Activated T-helper 2 cell treated with anti-CD3 and anti-CD28 coated beads, Interferon-gamma antibody, Interleukin-2, Interleukin-4, amounts not matched to agents 10 μg/mL and 5 μg/mL and 100 μg/mL, durations not matched to agents 14 hours and 24 hours and 36 hours (primary cell): ENCODE measurements at regions of chr6 and their contacts with region 1.

Region 1: GRCh38 chr6:42520786-42521607 is 42.8 kb upstream of the UBR2 start:
- DNase-seq: no peak
- H3K4me3 Mint-ChIP-seq: no peak overlapping the region
- H3K27ac Mint-ChIP-seq: peak overlapping the region; percentile 90
- H3K4me1 Mint-ChIP-seq: peaks cover 18% of the 10 kb centered on the region
- H3K27me3 Mint-ChIP-seq: no peaks in the 10 kb centered on the region

Region 2: DNA sequence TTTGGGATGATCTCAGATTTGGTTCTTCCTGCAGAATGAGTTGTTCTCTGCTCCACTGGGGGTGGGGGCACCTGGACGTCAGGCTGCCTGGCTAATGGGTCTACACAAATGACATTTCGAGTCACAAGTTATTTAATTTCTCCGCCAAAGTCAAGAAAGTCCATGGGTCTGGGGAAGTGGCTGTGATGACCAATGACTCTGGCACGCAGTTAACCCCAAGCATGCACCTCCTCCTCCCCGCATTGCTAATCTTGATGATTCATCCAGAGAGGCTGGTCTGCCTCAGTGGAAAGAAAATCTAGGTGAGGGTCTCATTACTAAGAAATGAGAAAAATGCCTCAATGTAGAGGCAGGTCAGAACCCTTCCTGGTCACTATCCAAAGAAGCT is 205.0 kb before region 1 on chr6:
- intact Hi-C with region 1: loop called (anchors 10 kb)
- DNase-seq: no peak
- H3K4me3 Mint-ChIP-seq: no peak overlapping the region
- H3K27ac Mint-ChIP-seq: peak overlapping the region; percentile 90
- H3K4me1 Mint-ChIP-seq: peaks cover 43% of the 10 kb centered on the region
- H3K27me3 Mint-ChIP-seq: no peaks in the 10 kb centered on the region

Region 3: GRCh38 chr6:42332916-42333315 is 188.1 kb before region 1 on chr6:
- intact Hi-C with region 1: no loop called
- DNase-seq: no peak
- H3K4me3 Mint-ChIP-seq: no peak overlapping the region
- H3K27ac Mint-ChIP-seq: no peak overlapping the region
- H3K4me1 Mint-ChIP-seq: peaks cover 17% of the 10 kb centered on the region
- H3K27me3 Mint-ChIP-seq: no peaks in the 10 kb centered on the region

Region 4: DNA sequence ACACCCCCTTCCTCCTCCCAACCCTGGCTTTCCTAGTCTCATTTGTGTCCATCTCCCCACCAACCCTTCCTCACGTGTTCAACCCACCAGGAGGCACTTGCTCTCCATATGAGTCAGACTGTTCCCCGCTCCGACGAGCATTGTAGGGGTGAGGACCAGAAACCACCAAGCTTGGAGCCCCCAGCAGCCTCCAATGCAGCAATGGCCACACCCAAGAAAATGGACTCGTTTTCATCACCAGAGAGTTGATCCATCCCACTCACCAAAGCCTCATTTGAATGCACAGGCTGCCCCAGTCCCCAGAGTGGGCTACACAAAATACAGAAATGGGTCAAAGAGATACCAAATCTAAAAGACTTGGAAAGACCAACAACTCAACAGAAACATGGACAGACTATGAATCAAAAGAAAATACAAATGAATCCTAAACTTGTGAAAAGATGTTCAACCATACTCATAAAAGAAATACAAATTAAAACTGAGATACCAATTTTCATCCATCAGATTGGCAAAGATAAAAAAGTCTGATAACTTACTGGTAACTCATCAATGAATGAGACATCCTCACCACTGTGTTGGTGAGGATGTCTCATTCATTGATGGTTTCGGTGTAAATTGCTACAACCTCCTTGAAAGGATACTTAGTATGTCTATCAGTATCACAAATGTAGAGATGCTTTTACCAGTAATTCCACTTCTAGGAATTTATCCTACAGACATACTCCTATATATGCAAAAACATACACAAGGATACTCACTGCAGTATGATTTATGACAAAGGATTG is 137.4 kb before region 1 on chr6:
- intact Hi-C with region 1: loop called (anchors 2 kb)
- DNase-seq: no peak
- H3K4me3 Mint-ChIP-seq: peak overlapping the region; percentile 51
- H3K27ac Mint-ChIP-seq: peak overlapping the region; percentile 97
- H3K4me1 Mint-ChIP-seq: peaks cover 75% of the 10 kb centered on the region
- H3K27me3 Mint-ChIP-seq: no peaks in the 10 kb centered on the region

Region 5: DNA sequence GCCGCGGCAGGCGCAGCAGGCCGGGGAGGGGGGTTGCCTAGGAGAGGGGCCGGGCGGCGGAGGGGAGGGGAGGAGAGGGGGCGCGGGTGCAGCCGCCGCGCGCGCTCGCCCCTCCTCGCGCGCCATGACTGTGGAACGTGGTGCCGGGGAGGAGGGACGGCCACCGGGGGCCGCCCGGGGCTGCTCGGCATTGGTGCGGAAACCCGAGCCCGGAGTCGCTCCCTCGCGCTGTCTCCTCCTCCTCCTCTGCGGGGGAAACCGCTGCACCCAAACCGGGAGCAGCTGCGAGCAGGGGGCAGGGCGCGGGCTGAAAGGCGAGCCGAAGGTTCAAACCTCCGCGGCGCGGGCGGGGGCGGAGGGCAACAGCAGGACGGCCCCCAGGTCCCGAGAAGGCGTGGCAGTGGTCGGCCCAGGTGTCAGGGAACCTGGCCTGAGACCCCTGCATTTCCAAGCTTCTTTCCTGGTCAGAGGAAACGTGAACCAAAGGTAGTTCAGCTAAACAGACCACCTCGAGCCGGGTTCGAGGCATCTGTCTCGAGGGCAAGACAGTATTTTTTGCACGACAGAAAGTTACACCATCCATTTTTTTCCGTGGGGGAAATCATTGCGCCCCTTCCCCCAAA is 67.9 kb before region 1 on chr6:
- intact Hi-C with region 1: loop called (anchors 2 kb)
- DNase-seq: peak; percentile 80
- H3K4me3 Mint-ChIP-seq: peak overlapping the region; percentile 98
- H3K27ac Mint-ChIP-seq: no peak overlapping the region
- H3K4me1 Mint-ChIP-seq: peaks cover 34% of the 10 kb centered on the region
- H3K27me3 Mint-ChIP-seq: peaks cover 5% of the 10 kb centered on the region

Region 6: DNA sequence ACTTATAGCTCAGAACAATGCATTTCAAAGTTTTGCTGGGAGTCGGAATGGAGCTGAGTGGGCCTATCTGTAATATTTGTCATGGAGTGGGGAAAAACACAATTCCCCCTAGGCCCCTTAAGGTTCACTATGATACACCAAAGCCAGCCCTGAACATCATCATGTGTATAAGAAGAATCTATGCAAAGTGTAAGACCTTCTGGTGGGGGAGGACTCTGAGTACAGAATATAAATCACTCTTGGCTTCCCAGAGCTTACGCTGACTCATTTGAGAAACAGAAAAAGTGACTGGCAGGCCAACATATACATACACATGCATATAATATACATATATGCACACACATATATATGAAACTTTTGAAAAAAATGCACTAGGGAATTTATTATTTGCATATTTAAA is 11.2 kb before region 1 on chr6:
- intact Hi-C with region 1: loop called (anchors 1 kb)
- DNase-seq: no peak
- H3K4me3 Mint-ChIP-seq: no peak overlapping the region
- H3K27ac Mint-ChIP-seq: no peak overlapping the region
- H3K4me1 Mint-ChIP-seq: peaks cover 14% of the 10 kb centered on the region
- H3K27me3 Mint-ChIP-seq: no peaks in the 10 kb centered on the region

Region 7: DNA sequence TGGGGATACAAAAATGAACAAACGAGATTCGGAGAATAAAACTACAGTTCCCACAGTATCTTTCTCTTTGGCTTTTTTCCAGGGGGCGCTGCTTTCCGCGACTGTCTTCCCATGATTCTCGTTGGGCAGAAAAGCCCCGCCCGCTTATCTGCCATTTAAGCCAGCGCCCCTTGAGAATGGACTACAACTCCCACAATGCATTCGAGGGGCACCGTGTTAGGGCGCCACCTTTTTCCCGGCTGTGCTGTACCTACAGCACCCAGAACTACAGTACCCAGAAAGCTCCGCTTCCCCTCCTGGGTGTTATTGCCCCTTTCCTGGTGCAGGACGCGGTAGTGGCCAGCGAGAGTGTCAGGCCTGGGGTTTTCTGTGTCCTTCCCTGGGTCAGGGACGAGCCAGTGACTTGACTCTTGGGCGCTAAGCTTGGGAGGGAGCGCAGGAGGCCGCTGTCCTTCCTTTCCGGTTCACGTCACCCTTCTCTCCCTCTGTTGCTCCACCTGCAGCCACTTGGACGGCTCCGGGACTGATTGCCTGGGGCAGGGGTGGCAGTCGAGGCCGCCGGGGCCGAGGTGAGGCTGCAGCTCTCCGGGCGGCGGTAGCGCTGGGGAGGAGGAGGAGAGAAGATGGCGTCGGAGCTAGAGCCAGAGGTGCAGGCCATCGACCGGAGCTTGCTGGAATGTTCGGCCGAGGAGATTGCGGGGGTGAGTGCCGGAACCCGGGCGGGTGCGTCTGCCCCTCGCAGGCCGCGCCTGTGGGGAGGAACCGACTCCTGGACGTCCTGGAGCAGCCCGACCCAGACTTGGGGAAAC is 42.9 kb after region 1 on chr6 and contains the start of gene UBR2:
- intact Hi-C with region 1: no loop called
- DNase-seq: peak; percentile 91
- H3K4me3 Mint-ChIP-seq: peak within 1 kb of the TSS; percentile 93
- H3K27ac Mint-ChIP-seq: peak within 1 kb of the TSS; percentile 87
- H3K4me1 Mint-ChIP-seq: peaks cover 26% of the 10 kb centered on the region
- H3K27me3 Mint-ChIP-seq: peaks cover 2% of the 10 kb centered on the region
- total RNA-seq, gene UBR2: 28.6 and 29.6 TPM in 2 replicates

Region 8: DNA sequence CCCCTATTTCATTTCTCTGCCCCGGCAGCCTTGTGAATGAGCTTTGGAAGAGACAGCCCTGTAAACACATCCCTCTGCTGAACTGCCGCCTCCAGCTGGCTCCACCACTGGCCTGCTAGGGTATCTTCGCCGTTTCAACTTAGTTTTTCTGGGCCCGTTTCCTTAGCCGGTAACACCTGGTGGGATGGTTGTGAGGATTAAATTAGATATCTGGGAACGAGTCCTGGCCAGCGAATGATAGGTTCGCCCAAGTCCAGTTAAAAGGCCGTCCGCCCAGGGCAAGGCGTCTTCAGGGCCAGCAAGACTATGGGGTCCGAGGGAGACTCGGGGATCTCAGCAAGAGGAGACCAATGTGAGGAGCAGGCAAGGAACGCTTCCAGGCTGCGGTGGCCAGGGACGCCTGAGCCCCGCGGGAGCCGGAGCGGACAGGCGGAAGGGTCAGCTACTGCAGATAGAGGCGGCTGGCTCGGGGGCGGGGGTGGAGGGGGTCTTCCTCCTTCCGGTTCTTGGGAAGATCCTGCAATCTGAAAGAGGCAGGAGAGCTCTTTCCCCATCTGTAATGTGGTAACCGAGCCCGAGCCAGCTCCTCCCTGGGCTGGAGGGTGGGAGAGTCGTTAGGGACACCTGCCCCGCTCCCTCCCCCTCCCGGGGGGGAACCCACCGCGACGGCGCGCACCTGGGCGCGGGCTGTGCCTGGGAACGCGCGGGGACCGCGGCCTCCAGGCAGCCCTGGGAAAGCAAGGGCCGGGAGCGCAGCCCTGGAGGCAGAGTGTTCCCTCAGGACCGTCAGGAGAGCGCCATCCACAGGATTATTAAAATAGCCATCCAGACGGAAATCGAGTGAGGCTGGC is 390.4 kb after region 1 on chr6:
- intact Hi-C with region 1: no loop called
- DNase-seq: no peak
- H3K4me3 Mint-ChIP-seq: no peak overlapping the region
- H3K27ac Mint-ChIP-seq: no peak overlapping the region
- H3K4me1 Mint-ChIP-seq: peaks cover 3% of the 10 kb centered on the region
- H3K27me3 Mint-ChIP-seq: peaks cover 6% of the 10 kb centered on the region